Activated CD4-positive, alpha-beta memory T cell treated with anti-CD3 and anti-CD28 coated beads for 36 hours (primary cell): ENCODE measurements at regions of chr11 and their contacts with region 1.

Region 1: GRCh38 chr11:78228467-78228866 is 39.7 kb downstream of the USP35 start:
- DNase-seq: peak; percentile 20
- H3K4me3 Mint-ChIP-seq: no peak overlapping the region
- H3K27ac Mint-ChIP-seq: no peak overlapping the region
- H3K4me1 Mint-ChIP-seq: peaks cover 15% of the 10 kb centered on the region
- H3K27me3 Mint-ChIP-seq: no peaks in the 10 kb centered on the region

Region 2: GRCh38 chr11:78139422-78140391 is 88.8 kb before region 1 on chr11 and contains the start of gene ALG8:
- CTCF ChIA-PET with region 1: no interaction called
- POLR2A ChIA-PET with region 1: no interaction called
- intact Hi-C with region 1: loop called (anchors 5 kb)
- DNase-seq: peak; percentile 98
- H3K4me3 Mint-ChIP-seq: peak within 1 kb of the TSS; percentile 81
- H3K27ac Mint-ChIP-seq: peak within 1 kb of the TSS; percentile 93
- H3K4me1 Mint-ChIP-seq: peaks cover 34% of the 10 kb centered on the region
- H3K27me3 Mint-ChIP-seq: no peaks in the 10 kb centered on the region
- total RNA-seq, gene ALG8: 45.8 to 45.9 TPM

Region 3: GRCh38 chr11:78202733-78203167 is 25.7 kb before region 1 on chr11:
- CTCF ChIA-PET with region 1: no interaction called
- POLR2A ChIA-PET with region 1: no interaction called
- intact Hi-C with region 1: loop called (anchors 2 kb)
- DNase-seq: peak; percentile 69
- H3K4me3 Mint-ChIP-seq: peak overlapping the region; percentile 63
- H3K27ac Mint-ChIP-seq: peak overlapping the region; percentile 90
- H3K4me1 Mint-ChIP-seq: peaks cover 37% of the 10 kb centered on the region
- H3K27me3 Mint-ChIP-seq: no peaks in the 10 kb centered on the region

Region 4: GRCh38 chr11:78290293-78291176 is 62.1 kb after region 1 on chr11:
- CTCF ChIA-PET with region 1: no interaction called
- POLR2A ChIA-PET with region 1: no interaction called
- intact Hi-C with region 1: loop called (anchors 1 kb)
- DNase-seq: peak; percentile 33
- H3K4me3 Mint-ChIP-seq: peak overlapping the region; percentile 2
- H3K27ac Mint-ChIP-seq: peak overlapping the region; percentile 83
- H3K4me1 Mint-ChIP-seq: peaks cover 34% of the 10 kb centered on the region
- H3K27me3 Mint-ChIP-seq: no peaks in the 10 kb centered on the region

Region 5: DNA sequence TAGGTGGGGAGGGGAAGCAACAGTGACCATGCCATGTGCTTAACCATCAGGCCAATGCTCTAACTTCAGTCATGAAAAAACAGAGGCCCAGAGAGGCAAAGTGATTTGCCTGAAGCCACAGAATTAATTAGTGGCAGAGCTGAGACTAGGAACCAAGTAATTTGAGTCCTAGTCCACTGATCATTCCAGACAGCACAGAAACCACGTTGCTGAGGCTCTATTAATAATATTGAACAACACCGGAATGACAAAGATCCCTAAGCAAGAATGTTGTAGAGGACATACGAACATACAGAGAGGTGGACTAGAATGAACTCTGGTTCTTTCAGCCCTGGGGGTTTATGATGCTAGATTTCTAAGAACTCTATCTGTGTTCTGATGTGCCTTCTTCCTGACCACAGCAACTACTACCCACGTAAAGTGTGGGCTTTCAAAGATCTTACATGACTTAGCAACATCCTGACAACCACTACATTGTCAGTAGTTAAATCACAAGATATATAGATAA is 96.9 kb after region 1 on chr11:
- CTCF ChIA-PET with region 1: no interaction called
- POLR2A ChIA-PET with region 1: no interaction called
- intact Hi-C with region 1: loop called (anchors 1 kb)
- DNase-seq: peak; percentile 16
- H3K4me3 Mint-ChIP-seq: no peak overlapping the region
- H3K27ac Mint-ChIP-seq: peak overlapping the region; percentile 77
- H3K4me1 Mint-ChIP-seq: peaks cover 40% of the 10 kb centered on the region
- H3K27me3 Mint-ChIP-seq: no peaks in the 10 kb centered on the region

Region 6: DNA sequence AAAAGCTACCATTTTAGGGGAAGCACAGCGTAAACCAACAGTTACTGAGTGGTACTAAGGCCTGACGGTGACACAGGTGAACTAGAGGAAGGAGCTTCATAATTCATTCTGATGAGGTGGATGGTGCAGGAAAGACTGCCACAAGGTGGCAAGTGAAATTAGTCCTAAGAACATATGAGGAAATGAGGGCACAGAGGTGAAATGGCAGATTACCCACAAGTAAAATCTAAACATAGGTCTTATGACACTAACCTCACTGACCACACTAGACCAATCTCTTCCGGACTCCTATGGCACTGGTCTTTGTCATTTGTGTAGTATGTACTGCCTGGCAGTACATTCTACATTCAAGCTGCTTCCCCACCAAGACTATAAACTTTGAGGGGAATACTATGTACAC is 168.9 kb after region 1 on chr11:
- CTCF ChIA-PET with region 1: no interaction called
- POLR2A ChIA-PET with region 1: no interaction called
- intact Hi-C with region 1: loop called (anchors 1 kb)
- DNase-seq: no peak
- H3K4me3 Mint-ChIP-seq: no peak overlapping the region
- H3K27ac Mint-ChIP-seq: no peak overlapping the region
- H3K4me1 Mint-ChIP-seq: peaks cover 5% of the 10 kb centered on the region
- H3K27me3 Mint-ChIP-seq: no peaks in the 10 kb centered on the region